ENCODE measurements at regions of chr13 and their contacts with region 1.

Region 1: GRCh38 chr13:44577236-44578066 is 1.3 kb upstream of the TSC22D1 start:
- DNase-seq: peak; percentile 91
- ATAC-seq: peak; percentile 72
- H3K4me3 Mint-ChIP-seq: peak overlapping the region; percentile 93
- H3K27ac Mint-ChIP-seq: peak overlapping the region; percentile 90
- H3K4me1 Mint-ChIP-seq: peaks cover 23% of the 10 kb centered on the region
- H3K27me3 Mint-ChIP-seq: no peaks in the 10 kb centered on the region
- CTCF ChIP-seq: no peak

Region 2: DNA sequence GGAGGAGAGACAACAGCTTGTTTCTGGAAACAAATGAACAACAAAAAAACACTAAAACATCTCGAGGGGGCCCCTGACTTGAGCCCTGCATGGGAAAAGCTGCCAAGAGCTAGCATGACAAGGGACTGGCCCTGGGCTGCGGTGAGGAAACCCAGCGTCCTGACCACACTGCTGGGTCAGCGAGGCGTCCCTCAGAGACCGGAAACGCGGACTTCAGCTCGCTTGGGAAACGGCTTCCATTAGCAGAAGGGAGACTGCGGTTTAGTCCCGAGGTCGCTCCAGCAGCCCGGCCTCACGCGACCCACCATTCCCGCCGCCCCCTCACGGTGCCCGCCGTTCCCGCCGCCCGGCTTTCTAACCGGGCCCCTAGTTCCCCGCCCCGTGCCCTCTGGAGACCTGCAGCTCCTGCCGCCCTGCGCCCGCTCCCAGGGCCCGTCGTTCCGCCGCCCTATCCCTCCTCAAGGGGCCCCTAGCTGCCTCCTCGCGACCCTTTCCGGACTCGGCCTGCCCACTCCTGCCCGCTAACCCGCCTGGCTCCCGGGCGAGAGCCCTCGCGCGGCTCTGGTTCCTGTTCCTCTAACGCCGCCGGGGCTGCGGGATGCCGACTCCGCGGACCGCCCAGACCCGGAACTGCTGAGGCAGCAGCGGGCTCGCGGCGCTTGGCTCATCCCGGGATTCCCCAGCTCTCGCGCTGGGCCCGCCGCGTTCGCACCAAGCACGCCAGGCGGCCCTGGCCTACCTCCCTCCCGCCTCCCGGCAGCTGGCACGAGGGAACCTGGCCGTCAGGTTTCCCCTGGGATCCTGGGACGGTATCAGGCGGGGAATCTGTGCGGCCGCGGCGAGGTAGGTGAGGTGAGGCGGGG is 698.3 kb before region 1 on chr13 and contains the start of gene CCDC122:
- CTCF ChIA-PET with region 1: no interaction called
- POLR2A ChIA-PET with region 1: no interaction called
- intact Hi-C with region 1: loop called (anchors 1 kb)
- DNase-seq: peak; percentile 83
- ATAC-seq: peak; percentile 86
- H3K4me3 Mint-ChIP-seq: peak within 1 kb of the TSS; percentile 93
- H3K27ac Mint-ChIP-seq: peak within 1 kb of the TSS; percentile 93
- H3K4me1 Mint-ChIP-seq: peaks cover 32% of the 10 kb centered on the region
- H3K27me3 Mint-ChIP-seq: no peaks in the 10 kb centered on the region
- CTCF ChIP-seq: no peak
- total RNA-seq, gene CCDC122: 7.1 and 8.0 TPM in 2 replicates

Region 3: DNA sequence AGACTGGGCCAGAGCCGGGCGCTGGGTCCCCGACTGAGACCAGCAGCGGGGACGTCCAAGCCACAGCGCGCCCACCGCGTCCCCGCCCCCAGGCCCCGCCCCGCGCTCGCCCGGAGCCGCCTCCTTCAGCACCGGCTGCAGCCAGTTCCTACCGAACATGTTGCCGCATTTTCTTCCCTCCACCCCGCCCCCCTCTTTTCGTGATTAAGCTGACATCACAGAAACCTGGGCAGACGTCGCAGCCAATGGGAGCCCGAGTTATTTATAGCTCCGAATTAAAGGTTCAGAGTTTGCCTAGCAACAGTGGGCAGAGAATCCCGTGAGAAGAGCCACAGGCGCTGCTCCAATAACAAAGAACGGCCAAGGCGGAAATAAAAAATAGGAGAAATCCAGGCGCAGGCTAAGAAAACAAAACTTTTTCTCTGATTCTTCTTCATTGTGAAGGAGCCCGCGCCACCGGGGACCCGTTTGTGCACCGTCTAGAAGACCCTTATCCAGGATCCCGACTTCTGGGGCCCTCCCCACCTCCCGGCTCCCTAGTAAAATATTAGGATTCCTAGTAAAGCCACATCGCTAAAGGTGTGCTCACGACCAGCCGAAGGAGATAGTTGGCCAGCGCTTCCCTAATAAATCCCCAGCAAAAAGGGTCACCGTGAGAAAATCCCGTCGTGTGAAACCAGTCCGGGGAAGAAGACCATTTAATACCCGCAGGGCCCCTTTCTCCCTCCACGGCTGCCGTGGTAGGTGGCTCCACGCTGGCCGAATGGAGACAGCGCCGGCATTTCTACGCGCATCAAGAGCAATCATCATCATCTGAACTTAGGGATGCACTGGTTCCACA is 142.1 kb before region 1 on chr13:
- CTCF ChIA-PET with region 1: no interaction called
- POLR2A ChIA-PET with region 1: interaction called, 3 read pairs
- intact Hi-C with region 1: loop called (anchors 1 kb)
- DNase-seq: peak; percentile 78
- ATAC-seq: peak; percentile 90
- H3K4me3 Mint-ChIP-seq: peak overlapping the region; percentile 85
- H3K27ac Mint-ChIP-seq: peak overlapping the region; percentile 69
- H3K4me1 Mint-ChIP-seq: peaks cover 28% of the 10 kb centered on the region
- H3K27me3 Mint-ChIP-seq: peaks cover 8% of the 10 kb centered on the region
- CTCF ChIP-seq: no peak

Region 4: DNA sequence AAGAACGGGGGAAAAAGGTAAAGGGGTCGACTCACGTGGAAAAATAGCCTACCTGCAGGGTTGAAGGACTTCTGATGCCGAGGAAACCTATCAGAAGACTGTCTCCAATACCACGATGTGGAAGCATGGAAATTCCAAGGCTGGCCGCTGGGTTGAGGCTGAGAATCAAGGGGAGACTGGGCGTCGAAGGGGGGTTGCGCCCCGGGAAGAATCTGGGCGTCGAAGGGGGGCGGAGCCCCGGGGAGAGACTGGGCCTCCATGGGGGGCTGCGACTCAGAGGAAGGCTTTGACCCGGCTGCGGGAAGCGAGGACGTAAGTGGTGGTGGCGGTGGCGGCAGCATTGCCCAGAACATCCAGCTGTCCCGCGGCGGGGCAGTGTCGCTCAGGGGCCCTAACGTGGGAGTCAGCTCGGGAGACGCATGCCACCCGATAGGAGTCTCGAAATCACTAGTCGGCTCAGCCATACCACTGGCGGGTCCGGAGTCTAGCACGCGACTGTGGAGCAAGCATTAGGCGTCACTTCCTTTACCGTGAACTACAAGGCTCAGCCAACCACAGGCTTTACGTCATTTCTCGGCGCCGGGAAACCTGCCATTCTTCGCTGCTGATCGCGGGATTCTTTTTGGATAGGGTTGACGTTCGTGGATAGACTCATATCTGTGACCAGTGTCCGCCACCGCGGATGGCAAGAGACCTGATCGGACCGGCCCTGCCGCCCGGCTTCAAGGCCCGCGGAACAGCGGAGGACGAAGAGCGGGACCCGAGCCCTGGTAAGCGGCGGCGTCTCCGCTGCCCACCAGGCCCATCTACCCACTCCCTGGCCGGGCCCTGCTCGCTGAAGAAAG is 411.7 kb after region 1 on chr13 and contains the starts of genes GPALPP1 and NUFIP1:
- CTCF ChIA-PET with region 1: no interaction called
- POLR2A ChIA-PET with region 1: no interaction called
- intact Hi-C with region 1: loop called (anchors 1 kb)
- DNase-seq: peak; percentile 80
- ATAC-seq: peak; percentile 97
- H3K4me3 Mint-ChIP-seq: peak within 1 kb of the TSS; percentile 99
- H3K27ac Mint-ChIP-seq: peak within 1 kb of the TSS; percentile 98
- H3K4me1 Mint-ChIP-seq: peaks cover 37% of the 10 kb centered on the region
- H3K27me3 Mint-ChIP-seq: no peaks in the 10 kb centered on the region
- CTCF ChIP-seq: no peak
- total RNA-seq, gene GPALPP1: 28.8 and 35.8 TPM in 2 replicates
- total RNA-seq, gene NUFIP1: 6.6 and 7.8 TPM in 2 replicates

Region 5: DNA sequence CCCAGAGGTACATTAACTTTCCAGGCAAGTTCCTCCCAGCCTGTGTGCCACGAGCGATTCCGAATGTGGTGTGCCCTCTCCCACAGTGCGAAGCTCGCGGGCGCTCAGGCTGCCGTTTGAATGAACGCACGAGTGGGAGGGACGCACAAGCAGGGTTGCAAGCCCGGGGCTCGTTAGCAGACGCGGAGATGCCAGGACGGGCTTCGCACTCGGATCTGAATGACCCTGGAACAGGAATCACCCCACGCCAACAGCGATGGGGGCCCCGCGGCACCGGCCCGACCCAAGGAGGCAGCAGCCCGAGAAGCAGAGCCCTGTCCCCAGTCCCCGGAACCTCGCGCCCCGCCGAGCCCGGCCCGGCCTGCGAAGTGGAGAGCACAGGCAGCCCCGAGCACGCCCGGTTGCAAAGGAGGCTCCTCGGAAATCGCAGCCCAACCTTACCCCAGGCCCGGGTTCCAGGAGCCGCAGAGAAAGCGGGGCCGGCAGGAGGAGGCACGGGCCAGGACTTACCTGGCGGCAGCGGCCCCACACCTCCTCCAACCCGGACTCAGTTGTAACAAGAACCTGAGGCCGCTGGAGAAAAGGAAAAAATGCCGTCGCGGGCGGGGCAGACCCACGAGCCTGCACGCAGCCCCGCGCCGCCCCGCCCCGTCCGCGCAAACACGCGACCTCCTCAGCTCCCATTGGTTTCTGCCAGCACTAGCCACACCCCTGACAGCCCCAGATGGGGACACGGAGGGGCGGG is 840.5 kb after region 1 on chr13 and contains the start of gene SLC25A30:
- CTCF ChIA-PET with region 1: no interaction called
- POLR2A ChIA-PET with region 1: no interaction called
- intact Hi-C with region 1: loop called (anchors 5 kb)
- DNase-seq: peak; percentile 87
- ATAC-seq: peak; percentile 96
- H3K4me3 Mint-ChIP-seq: peak within 1 kb of the TSS; percentile 95
- H3K27ac Mint-ChIP-seq: peak within 1 kb of the TSS; percentile 97
- H3K4me1 Mint-ChIP-seq: peaks cover 22% of the 10 kb centered on the region
- H3K27me3 Mint-ChIP-seq: no peaks in the 10 kb centered on the region
- CTCF ChIP-seq: no peak
- total RNA-seq, gene SLC25A30: 19.0 and 19.3 TPM in 2 replicates

Region 6: DNA sequence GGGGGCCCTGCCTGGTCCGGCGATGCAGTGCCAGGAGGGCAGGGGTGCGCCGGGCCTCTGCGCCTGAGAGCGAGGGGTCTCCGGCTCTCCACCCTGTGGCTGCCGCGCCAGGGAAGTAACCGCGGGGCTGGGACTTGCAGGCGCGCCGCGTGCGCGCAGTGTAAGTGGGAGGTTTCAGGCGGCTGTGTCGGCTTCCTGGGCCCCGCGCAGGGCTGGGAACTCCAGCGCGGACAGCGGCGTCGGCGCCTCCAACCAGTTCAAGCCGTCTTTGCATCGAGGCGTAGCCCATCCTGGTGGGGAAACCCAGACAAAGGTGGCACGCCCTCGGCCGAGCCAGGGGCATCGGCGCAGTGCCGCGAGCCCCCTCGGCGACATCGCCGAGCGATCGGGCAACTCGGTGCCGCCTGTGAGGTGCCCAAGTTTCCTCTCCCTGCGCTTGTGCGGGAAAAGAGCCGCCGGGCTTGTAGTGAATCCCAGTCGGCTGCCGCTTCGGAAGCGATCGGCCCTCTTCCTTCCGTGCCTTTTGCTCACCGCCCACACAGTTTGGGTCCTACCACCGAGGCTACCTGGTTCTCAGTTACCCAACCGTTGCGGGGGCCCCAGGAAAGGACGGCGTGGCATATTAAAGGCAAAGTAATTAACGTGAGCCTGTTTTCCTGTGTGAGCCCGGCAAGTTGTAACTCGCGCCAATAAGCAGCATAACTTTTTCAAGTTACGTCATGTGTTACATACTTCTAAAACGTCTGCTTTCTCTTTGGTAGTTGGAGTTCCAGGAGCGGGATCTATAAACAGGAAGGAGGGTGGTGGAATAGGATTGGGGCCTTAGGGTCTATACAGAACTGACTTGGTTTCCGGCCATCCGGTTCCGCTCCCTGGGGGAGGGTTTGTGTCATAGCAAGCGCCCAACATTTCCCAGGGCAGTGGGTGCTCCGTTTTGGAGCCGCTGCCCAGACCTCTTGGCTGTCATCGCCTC is 1976.7 kb after region 1 on chr13:
- CTCF ChIA-PET with region 1: no interaction called
- POLR2A ChIA-PET with region 1: no interaction called
- intact Hi-C with region 1: loop called (anchors 10 kb)
- DNase-seq: peak; percentile 72
- ATAC-seq: peak; percentile 57
- H3K4me3 Mint-ChIP-seq: peak overlapping the region; percentile 96
- H3K27ac Mint-ChIP-seq: peak overlapping the region; percentile 94
- H3K4me1 Mint-ChIP-seq: peaks cover 53% of the 10 kb centered on the region
- H3K27me3 Mint-ChIP-seq: no peaks in the 10 kb centered on the region
- CTCF ChIP-seq: no peak